Activated CD8-positive, alpha-beta T cell treated with anti-CD3 and anti-CD28 coated beads for 36 hours (primary cell): ENCODE measurements at regions of chr4 and their contacts with region 1.

Region 1: GRCh38 chr4:138935-139334 is 14.6 kb downstream of the ZNF718 start:
- DNase-seq: no peak
- ATAC-seq: no peak
- H3K4me3 Mint-ChIP-seq: no peak overlapping the region
- H3K27ac Mint-ChIP-seq: no peak overlapping the region
- H3K4me1 Mint-ChIP-seq: peaks cover 18% of the 10 kb centered on the region
- H3K27me3 Mint-ChIP-seq: no peaks in the 10 kb centered on the region
- CTCF ChIP-seq: no peak

Region 2: GRCh38 chr4:124275-125081 is 14.5 kb before region 1 on chr4 and contains the start of gene ZNF718:
- CTCF ChIA-PET with region 1: interaction called, 7 read pairs
- POLR2A ChIA-PET with region 1: interaction called, 16 read pairs
- intact Hi-C with region 1: no loop called
- DNase-seq: peak; percentile 96
- ATAC-seq: peak; percentile 97
- H3K4me3 Mint-ChIP-seq: peak within 1 kb of the TSS; percentile 95
- H3K27ac Mint-ChIP-seq: peak within 1 kb of the TSS; percentile 100
- H3K4me1 Mint-ChIP-seq: peaks cover 26% of the 10 kb centered on the region
- H3K27me3 Mint-ChIP-seq: no peaks in the 10 kb centered on the region
- CTCF ChIP-seq: no peak
- total RNA-seq, gene ZNF718: 7.4 to 7.5 TPM